Common myeloid progenitor, CD34-positive (primary cell): ENCODE measurements at regions of chr17 and their contacts with region 1.

Region 1: GRCh38 chr17:64103391-64104364 is 26.3 kb downstream of the ERN1 start:
- DNase-seq: peak in 2 of 3 donors; percentile 52 to 65
- H3K4me3 ChIP-seq: no peak overlapping the region
- H3K27ac ChIP-seq: no peak overlapping the region
- H3K4me1 ChIP-seq: peaks cover 0 to 20% (median 10%) of the 10 kb centered on the region in 4 experiments
- H3K27me3 ChIP-seq: no peaks in the 10 kb centered on the region

Region 2: GRCh38 chr17:64117981-64118979 is 14.6 kb after region 1 on chr17:
- CTCF ChIA-PET with region 1: interaction called, 10 read pairs
- POLR2A ChIA-PET with region 1: no interaction called
- DNase-seq: peak; percentile 44 to 89 (median 83)
- H3K4me3 ChIP-seq: no peak overlapping the region
- H3K27ac ChIP-seq: no peak overlapping the region
- H3K4me1 ChIP-seq: peaks cover 6 to 23% (median 16%) of the 10 kb centered on the region in 4 experiments
- H3K27me3 ChIP-seq: no peaks in the 10 kb centered on the region